Caco-2 (cell line): ENCODE measurements at regions of chr2 and their contacts with region 1.

Region 1: GRCh38 chr2:218216674-218217359 is at the start of gene ARPC2:
- DNase-seq: peak; percentile 92 to 95
- H3K4me3 ChIP-seq: peak within 1 kb of the TSS; percentile 87
- H3K4me3 Mint-ChIP-seq: peak within 1 kb of the TSS; percentile 93
- H3K27ac Mint-ChIP-seq: peak within 1 kb of the TSS; percentile 92
- H3K4me1 ChIP-seq: peaks cover 30% of the 10 kb centered on the region
- H3K4me1 Mint-ChIP-seq: peaks cover 26% of the 10 kb centered on the region
- H3K27me3 ChIP-seq: no peaks in the 10 kb centered on the region
- H3K27me3 Mint-ChIP-seq: no peaks in the 10 kb centered on the region
- CTCF ChIP-seq: no peak
- total RNA-seq, gene ARPC2: 284 and 290 TPM in 2 replicates

Region 2: DNA sequence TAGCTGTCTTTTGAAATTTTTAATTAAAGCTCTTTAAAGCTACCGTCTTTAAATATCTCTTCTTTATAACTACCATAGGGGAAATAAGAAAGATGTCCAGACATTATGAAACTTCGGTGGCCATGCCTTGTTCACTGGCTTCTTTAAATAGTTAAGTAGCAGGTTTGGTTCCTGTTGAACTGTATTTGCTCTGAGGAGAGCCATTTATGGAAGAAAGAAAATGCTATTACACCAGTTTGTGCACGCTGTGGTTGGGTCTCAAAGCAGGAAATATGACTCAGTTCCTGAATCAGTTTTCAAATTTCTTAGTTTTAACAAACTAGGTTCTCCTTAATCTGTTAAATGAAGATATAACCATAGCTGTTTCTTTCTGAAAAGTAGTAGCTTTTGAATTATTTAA is 12.4 kb after region 1 on chr2:
- CTCF ChIA-PET with region 1: interaction called, 7 read pairs
- POLR2A ChIA-PET with region 1: interaction called, 6 read pairs
- intact Hi-C with region 1: loop called (anchors 1 kb)
- DNase-seq: no peak
- H3K4me3 ChIP-seq: no peak overlapping the region
- H3K4me3 Mint-ChIP-seq: no peak overlapping the region
- H3K27ac Mint-ChIP-seq: no peak overlapping the region
- H3K4me1 ChIP-seq: peaks cover 40% of the 10 kb centered on the region
- H3K4me1 Mint-ChIP-seq: peaks cover 31% of the 10 kb centered on the region
- H3K27me3 ChIP-seq: no peaks in the 10 kb centered on the region
- H3K27me3 Mint-ChIP-seq: no peaks in the 10 kb centered on the region
- CTCF ChIP-seq: no peak